Heart left ventricle (tissue), 16 donors: ENCODE measurements at regions of chr15 and their contacts with region 1.

Region 1: DNA sequence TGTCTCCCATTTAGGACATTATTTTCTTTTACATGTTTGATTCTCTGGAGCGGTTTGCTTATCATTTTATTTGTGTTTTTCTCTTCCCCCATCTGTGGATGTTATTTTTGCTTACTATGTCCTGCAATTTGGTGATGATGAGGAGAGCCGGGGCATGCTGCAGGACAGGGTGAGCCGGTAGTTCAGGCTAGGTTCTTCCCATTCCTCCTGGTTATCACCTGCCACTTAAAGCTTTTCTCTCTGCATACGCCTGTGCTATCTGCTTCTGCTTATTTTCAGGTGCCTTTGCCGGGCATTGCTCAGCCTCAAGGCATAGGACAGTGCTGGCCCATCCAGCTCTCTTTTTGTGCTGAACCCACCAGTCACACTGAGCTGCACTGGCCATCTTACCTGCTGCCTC is 85.8 kb downstream of the MCTP2 start:
- DNase-seq: no peak
- ATAC-seq: no peak
- H3K4me3 ChIP-seq: no peak overlapping the region
- H3K27ac ChIP-seq: no peak overlapping the region
- H3K4me1 ChIP-seq: peaks cover 0 to 6% (median 0%) of the 10 kb centered on the region in 12 donors
- H3K27me3 ChIP-seq: peaks cover 0 to 2% (median 0%) of the 10 kb centered on the region in 9 donors
- CTCF ChIP-seq: no peak
- POLR2A ChIP-seq: no peak

Region 2: GRCh38 chr15:94119923-94120775 is 197.1 kb before region 1 on chr15:
- intact Hi-C with region 1: no loop called
- DNase-seq: peak in 4 of 5 donors; percentile 43 to 65 (median 54)
- ATAC-seq: peak; percentile 90 to 98 (median 96)
- H3K4me3 ChIP-seq: no peak overlapping the region
- H3K27ac ChIP-seq: peak overlapping the region in 11 of 12 donors; percentile 20 to 72 (median 60)
- H3K4me1 ChIP-seq: peaks cover 0 to 7% (median 0%) of the 10 kb centered on the region in 12 donors
- H3K27me3 ChIP-seq: no peaks in the 10 kb centered on the region
- CTCF ChIP-seq: peak; percentile 65 to 94 (median 86)
- POLR2A ChIP-seq: no peak

Region 3: GRCh38 chr15:94154245-94154644 is 163.0 kb before region 1 on chr15:
- intact Hi-C with region 1: no loop called
- DNase-seq: no peak
- ATAC-seq: no peak
- H3K4me3 ChIP-seq: no peak overlapping the region
- H3K27ac ChIP-seq: no peak overlapping the region
- H3K4me1 ChIP-seq: no peaks in the 10 kb centered on the region
- H3K27me3 ChIP-seq: no peaks in the 10 kb centered on the region
- CTCF ChIP-seq: peak in 2 of 12 donors; percentile 9 to 12
- POLR2A ChIP-seq: no peak

Region 4: DNA sequence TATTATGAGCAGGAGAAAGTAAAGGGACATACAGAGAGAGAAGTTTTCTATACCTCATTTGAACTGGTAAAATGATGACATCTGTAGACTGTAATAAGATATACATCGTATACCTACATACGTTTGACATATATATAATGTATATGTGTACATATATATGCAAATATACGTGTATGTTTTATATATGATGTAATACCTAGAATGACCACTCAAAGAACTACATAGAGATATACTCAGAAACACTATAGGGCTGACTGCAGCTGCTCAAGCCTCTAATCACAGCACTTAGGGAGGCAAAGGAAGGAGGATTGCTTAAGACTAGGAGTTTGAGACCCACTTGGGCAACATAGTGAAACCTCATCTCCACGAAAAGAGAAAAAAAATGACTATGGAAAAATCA is 134.3 kb before region 1 on chr15:
- intact Hi-C with region 1: loop called in 1 of 10 experiments (anchors 5 kb)
- DNase-seq: no peak
- ATAC-seq: no peak
- H3K4me3 ChIP-seq: no peak overlapping the region
- H3K27ac ChIP-seq: no peak overlapping the region
- H3K4me1 ChIP-seq: no peaks in the 10 kb centered on the region
- H3K27me3 ChIP-seq: peaks cover 0 to 2% (median 0%) of the 10 kb centered on the region in 9 donors
- CTCF ChIP-seq: peak in 1 of 12 donors; percentile 9
- POLR2A ChIP-seq: no peak

Region 5: GRCh38 chr15:94230956-94231722 is 86.1 kb before region 1 on chr15 and contains the start of gene MCTP2:
- intact Hi-C with region 1: loop called in 1 of 10 experiments (anchors 10 kb)
- DNase-seq: peak; percentile 34 to 88 (median 70)
- ATAC-seq: peak; percentile 55 to 95 (median 90)
- H3K4me3 ChIP-seq: peak within 1 kb of the TSS; percentile 16 to 70 (median 54)
- H3K27ac ChIP-seq: peak within 1 kb of the TSS in 3 of 12 donors; percentile 16 to 81 (median 68)
- H3K4me1 ChIP-seq: peaks cover 0 to 54% (median 7%) of the 10 kb centered on the region in 12 donors
- H3K27me3 ChIP-seq: peaks cover 0 to 55% (median 16%) of the 10 kb centered on the region in 9 donors
- CTCF ChIP-seq: no peak
- POLR2A ChIP-seq: no peak
- total RNA-seq, gene MCTP2: 0.35 to 12.1 (median 6.3) TPM